A549 (cell line): ENCODE measurements at regions of chr4 and their contacts with region 1.

Region 1: DNA sequence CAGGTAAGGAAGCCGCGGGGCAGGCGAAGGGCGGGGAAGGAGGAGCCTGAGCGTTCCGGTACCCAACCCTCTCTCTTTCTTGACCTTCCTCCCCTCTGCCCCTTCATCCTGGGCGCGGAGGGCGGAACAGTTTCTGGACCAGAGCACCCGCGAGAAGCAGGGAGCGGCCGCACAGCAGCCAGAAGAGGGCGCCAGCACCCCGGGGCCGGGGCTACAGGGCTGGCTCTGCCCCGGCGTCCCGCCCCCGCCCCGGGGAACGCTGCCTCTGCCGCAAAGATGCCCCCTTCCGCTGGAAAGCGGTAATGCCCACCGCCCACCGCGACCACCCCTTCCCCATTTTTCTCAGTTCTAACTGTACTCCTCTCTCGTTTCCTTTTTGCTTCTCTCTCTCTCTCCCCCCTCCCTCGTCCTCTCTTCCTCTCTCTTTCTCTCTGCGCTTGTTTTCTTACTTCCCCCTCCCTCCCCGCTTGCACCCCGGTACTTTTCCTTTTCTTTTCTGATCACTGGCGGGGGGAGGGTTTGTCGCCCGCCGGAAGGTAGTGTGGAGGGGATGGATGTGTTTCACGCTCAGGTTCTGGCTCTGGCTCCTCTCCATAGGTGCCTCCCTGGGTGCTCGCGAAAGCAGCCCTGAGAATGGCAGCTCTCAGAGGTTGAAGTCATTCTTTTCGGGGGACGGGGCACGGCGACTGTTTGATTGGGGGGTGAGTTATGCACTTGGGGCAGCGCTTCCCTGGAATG is 13.1 kb upstream of the PRDM8 start:
- DNase-seq: peak; percentile 35 to 52
- ATAC-seq: peak; percentile 95 to 100
- H3K4me3 ChIP-seq: peak overlapping the region; percentile 54
- H3K27ac ChIP-seq: peak overlapping the region; percentile 45 to 86; a peak in 4 of 6 replicates
- H3K4me1 ChIP-seq: no peaks in the 10 kb centered on the region
- CTCF ChIP-seq: peak; percentile 87
- EP300 ChIP-seq: no peak
- POLR2A ChIP-seq: no peak
- RAD21 ChIP-seq: peak; percentile 45 to 74

Region 2: GRCh38 chr4:79935274-79935673 is 248.9 kb before region 1 on chr4:
- CTCF ChIA-PET with region 1: no interaction called
- POLR2A ChIA-PET with region 1: no interaction called
- DNase-seq: no peak
- ATAC-seq: no peak
- H3K4me3 ChIP-seq: no peak overlapping the region
- H3K27ac ChIP-seq: no peak overlapping the region
- H3K4me1 ChIP-seq: no peaks in the 10 kb centered on the region
- CTCF ChIP-seq: no peak
- EP300 ChIP-seq: no peak
- POLR2A ChIP-seq: no peak
- RAD21 ChIP-seq: no peak

Region 3: GRCh38 chr4:80213117-80213815 is 29.0 kb after region 1 on chr4:
- CTCF ChIA-PET with region 1: interaction called, 12 read pairs
- POLR2A ChIA-PET with region 1: no interaction called
- DNase-seq: no peak
- ATAC-seq: no peak
- H3K4me3 ChIP-seq: no peak overlapping the region
- H3K27ac ChIP-seq: no peak overlapping the region
- H3K4me1 ChIP-seq: no peaks in the 10 kb centered on the region
- CTCF ChIP-seq: no peak
- EP300 ChIP-seq: no peak
- POLR2A ChIP-seq: no peak
- RAD21 ChIP-seq: no peak

Region 4: GRCh38 chr4:80266253-80266901 is 82.2 kb after region 1 on chr4 and contains the start of gene FGF5:
- CTCF ChIA-PET with region 1: no interaction called
- POLR2A ChIA-PET with region 1: no interaction called
- DNase-seq: no peak
- ATAC-seq: peak; percentile 79 to 84
- H3K4me3 ChIP-seq: peak within 1 kb of the TSS; percentile 54
- H3K27ac ChIP-seq: peak within 1 kb of the TSS in 1 of 2 experiments; percentile 70; a peak in 4 of 6 replicates
- H3K4me1 ChIP-seq: no peaks in the 10 kb centered on the region
- CTCF ChIP-seq: no peak
- EP300 ChIP-seq: no peak
- POLR2A ChIP-seq: no peak
- RAD21 ChIP-seq: no peak
- polyA plus RNA-seq, gene FGF5: 0.19 TPM in 1 of 2 replicates, not detected in the other